HepG2 (cell line): ENCODE measurements at regions of chr3 and their contacts with region 1.

Region 1: GRCh38 chr3:77236118-77236517 is 196.2 kb downstream of the ROBO2 start:
- DNase-seq: no peak
- ATAC-seq: no peak
- H3K4me3 ChIP-seq: no peak overlapping the region
- H3K27ac ChIP-seq: no peak overlapping the region
- H3K4me1 ChIP-seq: no peaks in the 10 kb centered on the region
- H3K27me3 ChIP-seq: no peaks in the 10 kb centered on the region
- CTCF ChIP-seq: no peak
- EP300 ChIP-seq: no peak
- POLR2A ChIP-seq: no peak
- RAD21 ChIP-seq: no peak

Region 2: DNA sequence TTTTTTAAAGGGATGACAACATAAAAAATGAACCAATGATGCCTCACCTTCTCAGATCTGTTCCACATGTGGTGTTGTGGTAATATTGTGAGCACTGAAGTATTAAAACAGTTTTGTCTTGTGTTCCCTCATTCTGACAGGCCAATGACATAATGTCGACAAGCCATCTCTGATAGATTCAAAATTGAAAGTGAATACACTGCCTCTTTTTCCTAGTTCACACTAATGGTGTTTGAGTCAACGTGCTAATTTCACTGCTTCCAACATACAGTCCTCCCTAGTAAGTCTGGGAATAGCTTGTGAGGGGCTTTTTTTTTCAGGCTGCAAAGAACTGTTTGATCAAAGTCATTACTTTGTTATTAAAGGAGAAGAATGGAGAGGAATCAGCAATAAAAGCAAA is 113.5 kb before region 1 on chr3:
- CTCF ChIA-PET with region 1: no interaction called
- POLR2A ChIA-PET with region 1: no interaction called
- in situ Hi-C with region 1: no loop called
- intact Hi-C with region 1: no loop called
- DNase-seq: no peak
- ATAC-seq: no peak
- H3K4me3 ChIP-seq: no peak overlapping the region
- H3K27ac ChIP-seq: no peak overlapping the region
- H3K4me1 ChIP-seq: no peaks in the 10 kb centered on the region
- H3K27me3 ChIP-seq: no peaks in the 10 kb centered on the region
- CTCF ChIP-seq: no peak
- EP300 ChIP-seq: no peak
- POLR2A ChIP-seq: no peak
- RAD21 ChIP-seq: no peak

Region 3: DNA sequence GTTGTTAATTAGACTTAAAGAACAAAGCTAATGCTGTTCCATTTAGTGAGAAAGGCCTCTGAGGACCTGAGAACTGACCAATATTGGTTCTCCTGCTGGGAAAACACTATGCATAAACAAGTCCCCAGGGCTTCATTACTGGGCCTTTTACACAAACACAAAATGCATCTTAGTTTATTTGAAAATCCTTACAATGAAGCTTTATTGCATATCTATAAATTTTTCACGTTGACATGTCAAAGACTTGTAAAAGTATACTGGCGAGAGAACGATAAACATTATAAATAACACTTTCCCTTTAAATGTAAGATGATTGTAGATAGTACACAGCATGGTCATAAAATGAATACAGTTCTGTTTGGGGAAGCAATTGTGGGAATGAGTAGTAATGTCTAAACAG is 44.5 kb before region 1 on chr3:
- CTCF ChIA-PET with region 1: no interaction called
- POLR2A ChIA-PET with region 1: no interaction called
- in situ Hi-C with region 1: no loop called
- intact Hi-C with region 1: loop called (anchors 1 kb)
- DNase-seq: no peak
- ATAC-seq: no peak
- H3K4me3 ChIP-seq: no peak overlapping the region
- H3K27ac ChIP-seq: no peak overlapping the region
- H3K4me1 ChIP-seq: no peaks in the 10 kb centered on the region
- H3K27me3 ChIP-seq: no peaks in the 10 kb centered on the region
- CTCF ChIP-seq: no peak
- EP300 ChIP-seq: no peak
- POLR2A ChIP-seq: no peak
- RAD21 ChIP-seq: no peak